WTC11 (cell line): ENCODE measurements at regions of chr7 and their contacts with region 1.

Region 1: GRCh38 chr7:5494683-5495561 is 71.3 kb upstream of the TNRC18 start:
- DNase-seq: peak; percentile 88
- ATAC-seq: peak; percentile 78
- H3K4me3 Mint-ChIP-seq: no peak overlapping the region
- H3K27ac Mint-ChIP-seq: no peak overlapping the region
- H3K4me1 Mint-ChIP-seq: peaks cover 17% of the 10 kb centered on the region
- H3K27me3 Mint-ChIP-seq: no peaks in the 10 kb centered on the region
- CTCF ChIP-seq: peak; percentile 57

Region 2: DNA sequence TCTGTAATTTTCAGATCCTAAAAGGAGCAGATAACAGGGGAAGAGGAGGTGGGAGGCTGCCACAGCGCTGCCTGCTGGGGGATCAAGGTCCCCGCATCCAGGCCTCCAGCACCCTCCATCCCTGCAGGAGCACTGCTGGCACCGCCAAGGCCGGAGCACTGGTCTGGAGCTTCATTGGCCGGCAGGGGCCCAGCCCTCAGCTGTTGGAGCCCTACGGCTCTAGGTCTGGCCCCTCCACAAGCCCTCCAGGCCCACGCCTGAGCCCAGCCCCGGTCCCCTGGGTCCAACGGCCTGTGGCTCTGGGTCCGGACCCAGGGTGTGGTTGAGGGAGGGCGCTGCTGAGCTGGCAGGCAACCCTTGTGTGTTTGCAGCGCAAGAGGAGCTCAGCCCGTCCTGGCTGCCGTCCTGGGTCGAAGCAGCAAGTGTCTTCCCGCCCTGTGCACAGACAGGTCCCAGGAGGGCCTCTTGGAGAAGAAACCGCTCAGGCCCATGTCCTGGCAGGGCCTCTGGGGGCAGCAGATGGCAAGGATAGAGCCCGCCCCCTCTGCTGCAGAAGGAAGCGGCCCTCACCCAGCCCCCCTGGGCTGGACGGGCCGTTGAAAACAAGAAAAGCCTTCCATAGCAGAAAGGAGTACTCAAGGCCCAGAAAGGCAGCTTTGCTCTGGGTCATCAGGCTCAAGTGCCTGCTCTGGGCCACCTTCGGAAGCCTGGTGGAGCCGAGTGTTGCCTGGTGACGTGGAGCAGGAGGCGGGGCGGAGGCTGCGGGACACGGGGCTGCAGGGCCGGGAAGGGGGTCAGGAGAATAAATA is 17.0 kb before region 1 on chr7:
- CTCF ChIA-PET with region 1: interaction called, 30 read pairs
- POLR2A ChIA-PET with region 1: no interaction called
- DNase-seq: peak; percentile 71
- ATAC-seq: peak; percentile 88
- H3K4me3 Mint-ChIP-seq: peak overlapping the region; percentile 40; the same call in 1 of the 2 replicates
- H3K27ac Mint-ChIP-seq: peak overlapping the region; percentile 98
- H3K4me1 Mint-ChIP-seq: peaks cover 20% of the 10 kb centered on the region
- H3K27me3 Mint-ChIP-seq: no peaks in the 10 kb centered on the region
- CTCF ChIP-seq: peak; percentile 33

Region 3: GRCh38 chr7:5526100-5526905 is 31.4 kb after region 1 on chr7:
- CTCF ChIA-PET with region 1: interaction called, 19 read pairs
- POLR2A ChIA-PET with region 1: interaction called, 21 read pairs
- DNase-seq: peak; percentile 37
- ATAC-seq: peak; percentile 7
- H3K4me3 Mint-ChIP-seq: peak overlapping the region; percentile 94
- H3K27ac Mint-ChIP-seq: peak overlapping the region; percentile 92
- H3K4me1 Mint-ChIP-seq: peaks cover 27% of the 10 kb centered on the region
- H3K27me3 Mint-ChIP-seq: peaks cover 6% of the 10 kb centered on the region; the same call in 1 of the 2 replicates
- CTCF ChIP-seq: no peak

Region 4: GRCh38 chr7:5574770-5575269 is 79.9 kb after region 1 on chr7:
- CTCF ChIA-PET with region 1: interaction called, 11 read pairs
- POLR2A ChIA-PET with region 1: no interaction called
- DNase-seq: peak; percentile 57
- ATAC-seq: peak; percentile 14
- H3K4me3 Mint-ChIP-seq: peak overlapping the region; percentile 49
- H3K27ac Mint-ChIP-seq: peak overlapping the region; percentile 33
- H3K4me1 Mint-ChIP-seq: peaks cover 27% of the 10 kb centered on the region
- H3K27me3 Mint-ChIP-seq: peaks cover 4% of the 10 kb centered on the region; the same call in 1 of the 2 replicates
- CTCF ChIP-seq: no peak

Region 5: DNA sequence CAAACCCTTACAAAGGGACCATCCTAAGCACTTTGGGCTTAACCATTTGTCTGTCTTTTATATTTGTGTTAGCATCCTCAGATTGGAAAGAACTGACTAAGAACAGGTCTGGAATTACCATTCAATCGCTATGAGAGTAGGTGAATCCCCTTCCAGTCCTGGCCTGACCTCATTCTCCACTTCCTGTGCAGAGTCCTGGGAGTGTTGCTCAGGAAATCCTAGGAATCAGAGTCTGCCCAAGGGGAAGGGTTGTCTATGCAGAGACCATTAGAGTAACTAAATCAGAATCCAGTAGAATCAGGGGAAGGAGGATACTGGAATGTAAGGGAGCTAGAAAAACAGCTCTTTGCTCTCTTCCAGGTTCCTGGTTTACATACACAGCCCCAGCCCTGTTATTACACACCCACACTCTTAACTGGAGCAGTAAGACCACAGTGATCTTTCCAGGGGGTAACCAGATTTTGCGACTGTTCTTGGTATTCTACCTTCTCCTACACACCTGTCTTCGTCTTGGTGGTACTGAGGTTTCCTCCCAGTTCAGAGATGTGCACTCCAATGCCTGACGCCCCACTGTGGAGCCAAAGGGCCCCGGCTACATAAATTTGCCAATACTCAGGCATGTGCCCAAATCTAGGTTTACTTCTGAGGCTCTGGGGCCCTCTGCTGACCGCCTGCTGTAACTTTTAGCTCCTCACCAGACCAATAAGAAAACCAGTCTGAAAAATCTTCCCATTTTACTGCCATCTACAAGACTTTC is 182.8 kb after region 1 on chr7:
- CTCF ChIA-PET with region 1: interaction called, 50 read pairs
- POLR2A ChIA-PET with region 1: no interaction called
- DNase-seq: peak; percentile 75
- ATAC-seq: peak; percentile 76
- H3K4me3 Mint-ChIP-seq: no peak overlapping the region
- H3K27ac Mint-ChIP-seq: no peak overlapping the region
- H3K4me1 Mint-ChIP-seq: peaks cover 33% of the 10 kb centered on the region
- H3K27me3 Mint-ChIP-seq: no peaks in the 10 kb centered on the region
- CTCF ChIP-seq: peak; percentile 60